ENCODE measurements at regions of chr2 and their contacts with region 1.

Region 1: DNA sequence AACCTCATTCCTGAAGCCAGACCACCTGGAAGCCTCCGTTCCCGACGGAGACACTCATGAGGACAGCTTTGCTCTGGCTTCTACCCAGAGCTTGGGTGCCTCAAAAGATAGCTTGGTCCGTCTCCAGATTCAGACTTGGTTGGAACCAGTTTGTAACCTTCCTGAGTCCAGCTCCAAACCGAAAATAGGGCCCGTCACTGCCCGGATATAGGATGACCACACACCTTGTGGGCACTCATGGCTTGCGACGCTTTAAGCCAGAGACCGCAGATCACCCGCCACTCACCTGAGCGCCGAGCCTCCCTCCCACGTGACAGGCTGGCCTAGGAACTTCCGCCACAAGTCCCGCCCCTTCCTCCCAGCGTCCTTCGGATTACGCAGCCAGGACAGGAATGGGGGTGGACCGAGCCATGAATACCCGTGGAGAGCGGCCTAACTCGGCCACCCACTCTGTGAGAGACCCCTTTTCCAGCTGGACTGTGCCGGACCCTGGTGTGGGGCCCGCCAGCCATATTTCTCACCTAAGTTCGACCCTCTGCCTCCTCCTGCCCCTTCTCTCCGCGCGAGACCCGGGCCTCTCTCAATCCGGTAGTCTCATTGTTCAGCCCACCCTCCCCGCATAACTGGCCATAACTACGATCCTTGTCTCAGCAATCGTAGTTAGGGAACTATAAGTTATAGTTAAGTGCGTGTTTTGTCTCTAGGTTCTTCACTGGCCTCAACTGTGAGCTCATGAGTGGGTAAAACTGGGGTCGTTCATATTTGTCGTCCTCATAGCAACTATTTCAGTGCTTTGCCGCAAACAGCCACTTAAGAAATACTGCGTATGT is at the start of gene MPV17:
- DNase-seq: peak; percentile 77 to 93 (median 82)
- ATAC-seq: peak; percentile 97
- H3K4me3 ChIP-seq: peak within 1 kb of the TSS; percentile 86
- H3K4me3 Mint-ChIP-seq: peak within 1 kb of the TSS; percentile 100
- H3K27ac ChIP-seq: peak within 1 kb of the TSS; percentile 90 to 93
- H3K27ac Mint-ChIP-seq: peak within 1 kb of the TSS; percentile 98
- H3K4me1 ChIP-seq: peaks cover 25% of the 10 kb centered on the region
- H3K4me1 Mint-ChIP-seq: peaks cover 31% of the 10 kb centered on the region
- H3K27me3 ChIP-seq: no peaks in the 10 kb centered on the region
- H3K27me3 Mint-ChIP-seq: no peaks in the 10 kb centered on the region
- CTCF ChIP-seq: no peak
- total RNA-seq, gene MPV17: 29.3 to 31.0 TPM

Region 2: DNA sequence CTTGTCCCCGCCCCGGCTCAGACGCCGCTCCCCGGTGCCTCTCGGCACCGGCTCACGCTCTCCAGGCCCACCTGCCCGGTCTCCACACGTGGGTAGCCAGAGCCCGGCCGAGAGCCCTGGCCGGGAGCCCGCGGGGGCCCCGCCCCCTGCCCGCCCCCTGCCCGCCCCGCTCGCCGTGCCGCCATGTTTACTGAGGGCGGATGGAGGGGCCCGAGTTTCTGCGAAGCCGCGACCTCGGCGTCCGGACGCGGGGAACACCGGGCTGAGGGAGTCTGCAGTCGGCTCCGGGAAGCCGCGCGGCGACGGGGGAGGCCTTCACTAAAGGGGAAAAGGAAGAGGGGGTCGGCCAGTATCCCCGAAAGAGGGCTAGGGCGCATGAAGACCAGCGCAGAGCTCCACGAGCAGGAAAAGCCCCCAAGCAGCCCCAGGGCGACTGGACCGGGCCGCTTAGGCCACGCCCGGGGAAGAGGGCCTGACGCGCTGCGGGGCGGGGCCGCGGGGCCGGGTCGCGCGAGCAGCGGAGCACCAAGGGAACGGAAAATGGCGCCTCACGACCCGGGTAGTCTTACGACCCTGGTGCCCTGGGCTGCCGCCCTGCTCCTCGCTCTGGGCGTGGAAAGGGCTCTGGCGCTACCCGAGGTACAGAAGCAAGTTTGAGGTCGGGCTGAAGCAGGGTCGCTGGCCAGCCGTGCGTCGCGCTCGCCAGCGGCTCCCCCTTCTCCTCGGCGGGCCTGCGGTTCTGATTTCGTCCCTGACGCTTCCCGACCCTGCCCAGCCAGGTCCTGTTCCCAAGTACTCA is 111.0 kb before region 1 on chr2 and contains the starts of genes ATRAID and SLC5A6:
- CTCF ChIA-PET with region 1: interaction called, 3 read pairs
- POLR2A ChIA-PET with region 1: interaction called, 4 read pairs
- intact Hi-C with region 1: loop called in 1 of 2 experiments (anchors 5 kb)
- DNase-seq: peak; percentile 76 to 95 (median 86)
- ATAC-seq: peak; percentile 83
- H3K4me3 ChIP-seq: peak within 1 kb of the TSS; percentile 78
- H3K4me3 Mint-ChIP-seq: peak within 1 kb of the TSS; percentile 98
- H3K27ac ChIP-seq: peak within 1 kb of the TSS; percentile 96 to 97
- H3K27ac Mint-ChIP-seq: peak within 1 kb of the TSS; percentile 98
- H3K4me1 ChIP-seq: peaks cover 26% of the 10 kb centered on the region
- H3K4me1 Mint-ChIP-seq: peaks cover 40% of the 10 kb centered on the region
- H3K27me3 ChIP-seq: no peaks in the 10 kb centered on the region
- H3K27me3 Mint-ChIP-seq: no peaks in the 10 kb centered on the region
- CTCF ChIP-seq: no peak
- total RNA-seq, gene ATRAID: 79.1 to 82.5 TPM
- total RNA-seq, gene SLC5A6: 196 to 207 TPM

Region 3: GRCh38 chr2:27356382-27357181 is 33.6 kb after region 1 on chr2 and contains the start of gene GTF3C2:
- CTCF ChIA-PET with region 1: no interaction called
- POLR2A ChIA-PET with region 1: interaction called, 24 read pairs
- intact Hi-C with region 1: loop called (anchors 1 to 2 kb)
- DNase-seq: peak; percentile 82 to 97 (median 88)
- ATAC-seq: peak; percentile 78
- H3K4me3 ChIP-seq: peak within 1 kb of the TSS; percentile 86
- H3K4me3 Mint-ChIP-seq: peak within 1 kb of the TSS; percentile 96
- H3K27ac ChIP-seq: peak within 1 kb of the TSS; percentile 87 to 89
- H3K27ac Mint-ChIP-seq: peak within 1 kb of the TSS; percentile 99
- H3K4me1 ChIP-seq: peaks cover 44% of the 10 kb centered on the region
- H3K4me1 Mint-ChIP-seq: peaks cover 56% of the 10 kb centered on the region
- H3K27me3 ChIP-seq: no peaks in the 10 kb centered on the region
- H3K27me3 Mint-ChIP-seq: no peaks in the 10 kb centered on the region
- CTCF ChIP-seq: no peak
- total RNA-seq, gene GTF3C2: 54.6 to 56.8 TPM

Region 4: GRCh38 chr2:27380626-27381545 is 57.9 kb after region 1 on chr2 and contains the start of gene ZNF513:
- CTCF ChIA-PET with region 1: no interaction called
- POLR2A ChIA-PET with region 1: interaction called, 12 read pairs
- intact Hi-C with region 1: no loop called
- DNase-seq: peak; percentile 75 to 94 (median 86)
- ATAC-seq: peak; percentile 92
- H3K4me3 ChIP-seq: peak within 1 kb of the TSS; percentile 66
- H3K4me3 Mint-ChIP-seq: peak within 1 kb of the TSS; percentile 93
- H3K27ac ChIP-seq: peak within 1 kb of the TSS; percentile 80 to 86
- H3K27ac Mint-ChIP-seq: peak within 1 kb of the TSS; percentile 91
- H3K4me1 ChIP-seq: peaks cover 18% of the 10 kb centered on the region
- H3K4me1 Mint-ChIP-seq: peaks cover 32% of the 10 kb centered on the region
- H3K27me3 ChIP-seq: no peaks in the 10 kb centered on the region
- H3K27me3 Mint-ChIP-seq: no peaks in the 10 kb centered on the region
- CTCF ChIP-seq: no peak
- total RNA-seq, gene ZNF513: 22.8 to 22.9 TPM

Region 5: DNA sequence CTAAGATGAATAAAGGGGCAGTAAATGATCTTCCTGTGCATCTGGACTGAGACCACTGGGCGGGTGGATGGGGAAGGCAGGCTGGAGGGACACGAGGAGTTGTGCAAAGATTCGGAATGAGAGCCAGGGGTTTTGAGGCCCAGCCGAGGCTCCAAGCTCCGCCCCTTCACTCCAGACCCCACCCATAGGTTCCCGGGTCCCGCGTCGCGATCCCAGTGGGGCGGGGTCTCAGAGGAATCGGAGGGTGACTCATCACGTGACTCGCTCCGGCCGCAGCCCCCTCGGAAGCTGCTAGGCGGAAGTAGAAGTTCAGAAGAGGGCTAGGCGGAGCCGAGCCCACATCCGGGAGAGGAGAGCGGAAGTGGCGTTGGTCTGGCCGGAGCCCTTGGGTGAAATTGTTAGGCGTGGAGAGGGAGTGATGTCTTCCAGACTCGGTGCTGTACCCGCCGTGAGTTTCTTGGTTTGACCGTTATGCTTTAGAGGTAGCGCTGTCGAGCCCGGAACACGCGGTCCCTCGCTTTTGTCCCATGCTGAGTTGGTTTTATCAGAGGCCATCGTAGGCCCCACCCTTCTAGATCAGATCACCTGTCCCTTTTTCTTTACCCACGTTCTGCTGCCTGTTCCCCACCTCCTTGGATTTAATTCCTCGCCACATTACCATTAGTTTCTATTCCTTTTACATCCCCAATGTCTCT is 259.9 kb after region 1 on chr2 and contains the start of gene ZNF512:
- CTCF ChIA-PET with region 1: no interaction called
- POLR2A ChIA-PET with region 1: no interaction called
- intact Hi-C with region 1: loop called in 1 of 2 experiments (anchors 5 kb)
- DNase-seq: peak; percentile 53 to 91 (median 70)
- ATAC-seq: peak; percentile 81
- H3K4me3 ChIP-seq: peak within 1 kb of the TSS; percentile 74
- H3K4me3 Mint-ChIP-seq: peak within 1 kb of the TSS; percentile 94
- H3K27ac ChIP-seq: peak within 1 kb of the TSS; percentile 56 to 80
- H3K27ac Mint-ChIP-seq: peak within 1 kb of the TSS; percentile 92
- H3K4me1 ChIP-seq: peaks cover 46% of the 10 kb centered on the region
- H3K4me1 Mint-ChIP-seq: peaks cover 54% of the 10 kb centered on the region
- H3K27me3 ChIP-seq: no peaks in the 10 kb centered on the region
- H3K27me3 Mint-ChIP-seq: no peaks in the 10 kb centered on the region
- CTCF ChIP-seq: no peak
- total RNA-seq, gene ZNF512: 13.6 to 14.1 TPM

Measured in CD4-positive, alpha-beta T cell (primary cell).